Activated CD4-positive, alpha-beta T cell treated with anti-CD3 and anti-CD28 coated beads for 36 hours (primary cell): ENCODE measurements at regions of chr9 and their contacts with region 1.

Region 1: DNA sequence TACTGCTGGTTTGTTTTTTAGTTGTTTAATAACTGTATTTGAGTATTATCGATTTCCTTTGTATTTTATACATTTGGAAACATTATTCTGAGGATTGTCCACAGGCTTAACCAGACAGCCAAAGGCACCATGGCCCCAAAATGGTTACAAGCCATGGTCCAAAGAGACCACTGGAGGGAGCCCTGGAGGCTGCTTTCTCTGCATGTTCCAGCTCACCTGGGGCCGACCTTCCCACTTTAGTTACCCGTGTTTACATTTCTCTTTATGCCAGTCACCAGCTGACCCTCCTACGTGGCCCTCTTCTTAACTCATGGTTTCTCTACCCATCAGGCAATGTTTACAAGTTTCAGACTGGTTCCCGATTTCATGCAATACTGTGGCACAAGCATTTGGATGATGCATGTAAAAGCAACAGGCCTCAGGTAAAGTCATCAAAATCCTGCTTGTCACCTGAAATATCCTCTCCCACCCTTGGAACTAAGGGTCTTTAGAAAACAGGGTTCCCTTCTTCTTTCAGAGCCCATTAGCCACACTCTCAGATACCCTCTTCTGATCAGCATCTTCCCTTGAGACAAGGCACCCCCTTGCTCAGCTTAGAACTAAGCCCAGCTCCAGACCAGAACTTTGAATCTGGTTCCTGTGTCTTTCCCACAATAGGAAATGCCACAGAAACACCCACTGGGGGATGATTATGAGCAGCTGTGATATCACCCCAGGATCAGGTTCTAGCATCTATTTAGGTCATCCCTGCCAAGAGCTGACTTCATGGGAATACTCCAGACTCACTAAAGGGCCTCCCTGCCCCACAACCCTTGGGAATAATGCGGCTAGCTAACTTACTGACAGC is 49.9 kb upstream of the GARNL3 start:
- DNase-seq: peak; percentile 80
- ATAC-seq: peak; percentile 83
- H3K4me3 Mint-ChIP-seq: no peak overlapping the region
- H3K27ac Mint-ChIP-seq: no peak overlapping the region
- H3K4me1 Mint-ChIP-seq: peaks cover 4% of the 10 kb centered on the region
- H3K27me3 Mint-ChIP-seq: no peaks in the 10 kb centered on the region

Region 2: GRCh38 chr9:126939821-126940221 is 274.8 kb before region 1 on chr9:
- CTCF ChIA-PET with region 1: interaction called, 10 read pairs
- POLR2A ChIA-PET with region 1: no interaction called
- intact Hi-C with region 1: no loop called
- DNase-seq: no peak
- ATAC-seq: no peak
- H3K4me3 Mint-ChIP-seq: no peak overlapping the region
- H3K27ac Mint-ChIP-seq: no peak overlapping the region
- H3K4me1 Mint-ChIP-seq: peaks cover 4% of the 10 kb centered on the region
- H3K27me3 Mint-ChIP-seq: peaks cover 16% of the 10 kb centered on the region

Region 3: DNA sequence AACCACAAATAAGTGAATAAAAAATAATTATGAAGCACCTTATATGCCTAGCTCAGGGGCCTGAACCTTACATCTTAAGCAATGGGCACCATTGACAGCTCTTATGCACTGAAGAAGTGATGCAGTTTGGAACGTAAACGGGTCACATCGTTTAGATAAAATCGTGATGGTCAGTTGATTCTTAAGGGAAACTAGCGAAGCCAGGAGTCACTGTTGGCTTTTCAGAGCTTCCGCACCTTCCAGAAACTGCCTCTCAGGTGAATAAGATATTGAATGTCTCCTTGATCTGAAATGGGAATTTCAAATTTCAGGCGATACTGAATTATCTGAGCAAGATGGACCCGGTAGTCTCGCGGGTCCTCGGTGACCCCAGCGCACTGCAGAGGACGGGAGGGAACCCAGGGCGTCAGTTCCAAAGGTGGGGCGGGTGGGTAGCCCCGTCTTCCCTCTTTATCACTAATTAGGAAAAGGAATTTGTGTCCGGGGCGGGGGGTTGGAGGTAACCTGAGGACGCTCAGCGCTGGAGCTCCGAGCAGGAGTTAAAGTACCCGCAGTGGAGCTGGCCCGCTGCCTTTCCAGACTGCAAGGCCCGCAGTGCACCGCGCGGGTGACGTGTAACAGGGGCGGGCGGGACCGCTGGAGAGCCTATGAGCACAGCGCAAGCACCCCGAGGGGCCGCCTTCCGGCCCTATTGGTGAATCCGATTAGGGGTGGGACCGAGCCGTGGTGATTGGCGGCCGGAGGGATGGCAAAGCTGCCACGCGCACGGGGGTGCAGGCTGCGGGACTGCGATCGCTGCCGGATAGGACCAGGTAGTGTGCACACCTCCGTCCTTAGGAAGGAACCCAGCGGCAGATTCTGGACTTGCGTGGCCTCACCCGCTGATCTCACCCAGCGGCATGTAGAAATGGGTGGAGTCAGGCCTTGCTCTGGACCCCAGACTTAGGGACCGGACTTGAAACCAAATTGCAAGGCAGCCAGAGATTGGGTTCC is 30.3 kb after region 1 on chr9:
- CTCF ChIA-PET with region 1: interaction called, 12 read pairs
- POLR2A ChIA-PET with region 1: no interaction called
- intact Hi-C with region 1: no loop called
- DNase-seq: peak; percentile 98
- ATAC-seq: peak; percentile 100
- H3K4me3 Mint-ChIP-seq: peak overlapping the region; percentile 78
- H3K27ac Mint-ChIP-seq: peak overlapping the region; percentile 59
- H3K4me1 Mint-ChIP-seq: peaks cover 6% of the 10 kb centered on the region
- H3K27me3 Mint-ChIP-seq: peaks cover 5% of the 10 kb centered on the region

Region 4: GRCh38 chr9:127336738-127337251 is 122.2 kb after region 1 on chr9:
- CTCF ChIA-PET with region 1: no interaction called
- POLR2A ChIA-PET with region 1: no interaction called
- intact Hi-C with region 1: no loop called
- DNase-seq: no peak
- ATAC-seq: no peak
- H3K4me3 Mint-ChIP-seq: no peak overlapping the region
- H3K27ac Mint-ChIP-seq: no peak overlapping the region
- H3K4me1 Mint-ChIP-seq: no peaks in the 10 kb centered on the region
- H3K27me3 Mint-ChIP-seq: peaks cover 7% of the 10 kb centered on the region

Region 5: DNA sequence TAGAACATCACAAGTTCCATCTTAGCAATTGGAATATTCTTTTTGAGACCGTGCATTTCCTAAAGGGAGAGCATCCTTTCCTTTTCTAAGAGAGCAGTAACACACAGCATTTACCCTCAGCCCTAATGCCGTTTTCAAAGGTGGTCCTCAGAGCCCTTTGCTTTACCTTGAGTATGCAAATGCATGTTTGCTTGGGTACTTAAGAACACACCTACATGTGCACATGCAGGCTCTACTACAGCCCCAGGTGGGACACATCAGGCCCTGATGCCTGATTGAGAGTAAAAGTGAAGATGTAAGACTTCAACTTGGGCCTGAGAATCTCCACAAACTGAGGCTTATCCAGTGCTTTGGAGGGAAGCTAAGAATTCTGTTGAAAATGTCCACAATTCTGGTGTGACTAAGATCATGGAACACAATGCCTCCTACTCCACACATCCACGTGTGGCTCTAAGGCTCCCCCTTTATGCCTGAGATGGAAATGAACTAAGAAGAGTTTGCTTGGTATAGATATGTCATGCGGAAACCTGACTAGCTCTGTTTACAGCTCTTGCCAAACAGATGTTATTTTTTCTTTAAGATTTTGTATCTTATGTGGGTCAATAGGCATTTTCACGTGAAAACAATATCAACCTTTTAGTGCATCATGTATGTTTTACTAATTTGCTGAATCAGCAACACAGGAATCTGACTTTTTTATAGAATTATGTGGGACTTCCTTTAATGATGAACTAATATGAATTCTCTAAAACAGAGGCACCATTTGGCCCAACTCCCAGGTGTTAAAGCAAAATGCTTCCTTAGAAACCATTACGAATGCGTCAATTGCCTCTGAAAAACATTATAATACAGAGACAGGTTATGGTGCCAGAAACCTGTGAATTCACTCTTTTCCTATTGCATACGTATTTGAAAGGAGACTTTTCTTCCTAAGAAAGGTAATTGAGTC is 133.5 kb after region 1 on chr9:
- CTCF ChIA-PET with region 1: no interaction called
- POLR2A ChIA-PET with region 1: no interaction called
- intact Hi-C with region 1: loop called in 1 of 2 experiments (anchors 5 kb)
- DNase-seq: no peak
- ATAC-seq: no peak
- H3K4me3 Mint-ChIP-seq: no peak overlapping the region
- H3K27ac Mint-ChIP-seq: no peak overlapping the region
- H3K4me1 Mint-ChIP-seq: no peaks in the 10 kb centered on the region
- H3K27me3 Mint-ChIP-seq: peaks cover 17% of the 10 kb centered on the region

Region 6: DNA sequence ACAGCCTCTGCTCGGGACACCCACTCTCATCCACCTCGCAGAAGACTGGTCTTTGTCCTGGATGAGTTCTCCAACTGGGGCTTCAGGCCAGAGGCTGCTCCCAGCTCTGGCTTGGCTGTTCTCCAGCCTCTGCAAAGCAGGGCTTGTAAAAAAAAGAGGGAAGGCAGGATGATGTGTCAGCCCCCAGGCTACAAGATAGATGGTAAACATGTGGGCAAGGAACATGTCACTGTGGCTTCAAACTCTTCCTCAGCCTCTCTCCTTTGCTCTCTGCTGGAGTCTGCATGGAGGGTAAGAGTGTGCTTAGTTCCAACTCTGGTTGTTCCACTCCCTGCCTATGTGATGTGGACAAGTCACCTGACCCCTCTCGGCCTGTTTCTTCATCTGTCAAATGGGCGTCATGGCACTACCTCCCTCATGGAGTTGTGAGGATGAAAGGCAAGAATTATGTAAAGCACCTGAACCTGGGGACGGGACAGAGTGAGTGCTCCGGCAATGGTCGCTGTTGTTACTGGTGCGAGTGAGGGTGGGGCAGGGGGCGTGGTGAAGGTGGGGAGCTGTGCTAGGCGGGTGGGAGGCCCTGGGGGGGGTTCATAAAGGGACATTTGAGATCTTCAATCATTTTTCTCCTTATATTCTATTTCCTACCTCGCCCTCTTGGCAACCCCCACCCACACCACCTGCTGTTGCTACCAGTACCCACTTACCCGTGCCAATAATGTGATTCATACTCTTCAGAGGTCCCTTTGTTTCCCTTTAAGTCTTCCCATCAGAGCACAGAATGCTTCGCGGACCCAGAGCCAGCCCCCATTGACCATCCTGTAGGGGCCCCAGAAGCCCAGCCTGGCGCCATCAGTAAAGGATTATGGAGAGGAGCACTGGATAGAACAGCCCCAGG is 202.7 kb after region 1 on chr9:
- CTCF ChIA-PET with region 1: interaction called, 4 read pairs
- POLR2A ChIA-PET with region 1: interaction called, 3 read pairs
- intact Hi-C with region 1: loop called in 1 of 2 experiments (anchors 1 kb)
- DNase-seq: no peak
- ATAC-seq: no peak
- H3K4me3 Mint-ChIP-seq: no peak overlapping the region
- H3K27ac Mint-ChIP-seq: no peak overlapping the region
- H3K4me1 Mint-ChIP-seq: no peaks in the 10 kb centered on the region
- H3K27me3 Mint-ChIP-seq: peaks cover 26% of the 10 kb centered on the region